H1 (cell line): ENCODE measurements at regions of chr19 and their contacts with region 1.

Region 1: DNA sequence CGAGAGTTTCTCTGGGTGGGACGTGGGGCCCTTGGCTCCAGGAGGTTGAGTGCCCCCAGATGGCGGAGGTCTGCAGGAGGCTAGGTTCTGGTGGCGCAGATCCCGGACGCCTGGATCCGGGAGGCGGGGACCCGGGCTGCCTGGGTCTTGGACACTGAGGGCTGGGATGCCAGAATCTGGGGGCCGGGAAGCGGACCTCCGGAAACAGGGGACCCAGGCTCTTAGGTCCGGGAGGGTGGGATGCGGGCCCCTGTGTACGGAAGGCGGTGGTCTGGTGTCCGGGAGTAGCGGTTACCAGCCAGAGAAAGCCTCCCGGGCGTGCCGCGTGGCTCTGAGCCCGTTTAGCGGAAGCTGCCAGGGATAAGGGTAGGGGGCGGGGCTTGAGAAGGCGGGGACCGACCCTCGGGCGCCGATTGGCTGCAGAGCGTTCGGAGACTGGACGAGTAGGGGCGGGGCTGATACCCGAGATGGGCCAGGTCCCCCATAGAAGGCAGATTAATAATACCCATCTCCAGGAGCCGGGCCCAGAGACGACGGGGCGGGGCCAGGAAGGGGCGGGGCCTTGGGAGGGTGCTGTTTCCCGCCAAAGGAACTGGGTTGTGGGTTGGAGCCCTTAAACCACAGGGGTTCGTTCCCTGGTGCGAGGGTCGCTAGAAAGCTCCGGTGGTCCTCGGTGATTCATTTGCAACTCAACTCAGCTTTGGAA is at the start of gene SLC1A5:
- DNase-seq: peak; percentile 95 to 99
- H3K4me3 ChIP-seq: peak within 1 kb of the TSS; percentile 78 to 96 (median 90)
- H3K27ac ChIP-seq: peak within 1 kb of the TSS; percentile 77; the same call in 1 of the 2 replicates
- H3K4me1 ChIP-seq: peaks cover 6 to 17% (median 10%) of the 10 kb centered on the region in 4 experiments; a peak in 6 of 7 replicates
- H3K27me3 ChIP-seq: no peaks in the 10 kb centered on the region; a peak in 1 of 7 replicates
- CTCF ChIP-seq: no peak
- EP300 ChIP-seq: no peak
- POLR2A ChIP-seq: peak; percentile 99
- RAD21 ChIP-seq: no peak; a peak in 1 of 4 replicates
- total RNA-seq, gene SLC1A5: 290 and 291 TPM in 2 replicates

Region 2: GRCh38 chr19:46600384-46601317 is 187.8 kb before region 1 on chr19:
- CTCF ChIA-PET with region 1: no interaction called
- POLR2A ChIA-PET with region 1: no interaction called
- DNase-seq: peak; percentile 88 to 100
- H3K4me3 ChIP-seq: peak overlapping the region; percentile 90 to 100 (median 94)
- H3K27ac ChIP-seq: peak overlapping the region; percentile 100
- H3K4me1 ChIP-seq: peaks cover 0 to 19% (median 9%) of the 10 kb centered on the region in 4 experiments; a peak in 5 of 7 replicates
- H3K27me3 ChIP-seq: no peaks in the 10 kb centered on the region
- CTCF ChIP-seq: no peak
- EP300 ChIP-seq: peak in 1 of 2 experiments; percentile 97; a peak in 2 of 3 replicates
- POLR2A ChIP-seq: peak in 1 of 2 experiments; percentile 78; a peak in 2 of 3 replicates
- RAD21 ChIP-seq: no peak

Region 3: DNA sequence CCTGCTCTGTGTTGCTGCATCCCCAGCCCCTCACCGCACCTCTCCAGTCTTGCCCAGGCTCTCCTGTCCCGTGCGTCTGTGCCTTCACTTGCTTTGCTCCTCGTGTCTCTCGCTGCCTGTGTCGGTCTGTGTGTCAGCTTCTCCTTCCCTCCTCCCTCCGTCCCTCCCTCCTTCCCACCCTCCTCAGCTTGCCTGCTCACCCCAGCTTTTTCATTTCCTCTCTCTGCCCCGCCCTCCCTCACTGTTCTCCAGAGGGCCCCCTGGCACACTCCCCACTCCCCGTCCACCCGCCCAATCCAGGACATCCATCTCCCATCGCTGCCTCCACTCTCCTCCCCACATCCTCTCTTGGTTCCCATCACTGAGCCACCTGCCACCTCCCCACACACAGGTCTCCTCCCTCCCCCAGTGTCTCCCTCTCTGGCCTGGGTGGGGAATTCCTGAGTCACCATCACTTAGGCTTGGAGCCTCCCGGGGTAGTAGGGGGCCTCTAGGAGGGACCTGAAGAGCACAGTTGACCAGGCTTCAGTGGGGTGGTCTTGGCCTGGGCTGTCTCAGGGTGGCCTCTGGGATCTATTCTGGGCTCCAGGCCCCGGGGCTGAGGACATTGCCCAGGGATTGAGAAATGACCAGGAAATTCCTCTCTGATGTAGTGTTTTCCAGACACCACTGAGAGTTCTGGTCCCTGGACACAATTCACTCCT is 163.3 kb before region 1 on chr19 and contains the start of gene PTGIR:
- CTCF ChIA-PET with region 1: no interaction called
- POLR2A ChIA-PET with region 1: no interaction called
- DNase-seq: no peak
- H3K4me3 ChIP-seq: no peak within 1 kb of the TSS
- H3K27ac ChIP-seq: no peak within 1 kb of the TSS
- H3K4me1 ChIP-seq: peaks cover 0 to 12% (median 4%) of the 10 kb centered on the region in 4 experiments; a peak in 4 of 7 replicates
- H3K27me3 ChIP-seq: no peaks in the 10 kb centered on the region
- CTCF ChIP-seq: no peak
- EP300 ChIP-seq: no peak
- POLR2A ChIP-seq: no peak
- RAD21 ChIP-seq: no peak
- total RNA-seq, gene PTGIR: not detected in 2 replicates

Region 4: DNA sequence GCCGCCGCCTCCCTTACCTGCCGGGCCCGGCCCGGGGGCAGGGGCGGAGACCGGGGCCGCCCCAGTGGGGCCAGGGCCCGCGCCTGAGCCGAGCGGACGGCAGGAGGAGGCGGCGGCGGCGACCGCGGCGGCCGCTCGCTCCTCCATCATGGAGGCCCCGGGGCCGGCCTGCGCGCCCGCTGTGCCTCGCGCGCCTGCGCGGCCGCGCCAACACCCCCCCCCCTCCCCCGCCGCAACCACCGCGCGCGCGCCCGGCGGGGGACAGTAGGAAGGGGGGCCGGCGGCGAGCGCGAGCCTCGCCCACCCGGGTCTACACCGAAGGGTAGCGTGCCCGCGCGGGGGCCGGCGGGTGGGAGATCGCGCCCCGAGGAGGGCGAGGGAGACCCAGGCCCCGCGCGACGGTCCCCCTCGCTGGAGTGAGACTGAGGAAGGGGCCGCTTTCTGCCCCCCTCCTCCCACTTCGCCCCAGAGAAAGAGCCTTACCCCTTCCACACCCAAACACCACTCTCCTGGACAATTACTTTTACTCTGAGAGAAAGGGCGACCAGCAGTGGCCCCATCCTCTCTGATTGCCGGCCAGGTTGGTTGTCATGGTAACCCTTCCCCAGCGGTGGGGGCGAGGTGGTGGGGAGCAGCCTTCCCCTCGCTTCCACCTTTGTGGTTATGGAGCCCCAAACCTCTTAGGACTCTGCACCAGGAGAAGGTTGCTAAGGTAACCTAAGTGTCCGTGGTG is 42.0 kb before region 1 on chr19 and contains the start of gene STRN4:
- CTCF ChIA-PET with region 1: interaction called, 6 read pairs
- POLR2A ChIA-PET with region 1: interaction called, 12 read pairs
- DNase-seq: peak in 1 of 2 experiments; percentile 67
- H3K4me3 ChIP-seq: peak within 1 kb of the TSS; percentile 84 to 97 (median 93)
- H3K27ac ChIP-seq: peak within 1 kb of the TSS; percentile 85
- H3K4me1 ChIP-seq: peaks cover 0 to 8% (median 2%) of the 10 kb centered on the region in 4 experiments; a peak in 6 of 7 replicates
- H3K27me3 ChIP-seq: no peaks in the 10 kb centered on the region
- CTCF ChIP-seq: no peak
- EP300 ChIP-seq: no peak
- POLR2A ChIP-seq: no peak; a peak in 1 of 3 replicates
- RAD21 ChIP-seq: no peak
- total RNA-seq, gene STRN4: 120 and 124 TPM in 2 replicates

Region 5: DNA sequence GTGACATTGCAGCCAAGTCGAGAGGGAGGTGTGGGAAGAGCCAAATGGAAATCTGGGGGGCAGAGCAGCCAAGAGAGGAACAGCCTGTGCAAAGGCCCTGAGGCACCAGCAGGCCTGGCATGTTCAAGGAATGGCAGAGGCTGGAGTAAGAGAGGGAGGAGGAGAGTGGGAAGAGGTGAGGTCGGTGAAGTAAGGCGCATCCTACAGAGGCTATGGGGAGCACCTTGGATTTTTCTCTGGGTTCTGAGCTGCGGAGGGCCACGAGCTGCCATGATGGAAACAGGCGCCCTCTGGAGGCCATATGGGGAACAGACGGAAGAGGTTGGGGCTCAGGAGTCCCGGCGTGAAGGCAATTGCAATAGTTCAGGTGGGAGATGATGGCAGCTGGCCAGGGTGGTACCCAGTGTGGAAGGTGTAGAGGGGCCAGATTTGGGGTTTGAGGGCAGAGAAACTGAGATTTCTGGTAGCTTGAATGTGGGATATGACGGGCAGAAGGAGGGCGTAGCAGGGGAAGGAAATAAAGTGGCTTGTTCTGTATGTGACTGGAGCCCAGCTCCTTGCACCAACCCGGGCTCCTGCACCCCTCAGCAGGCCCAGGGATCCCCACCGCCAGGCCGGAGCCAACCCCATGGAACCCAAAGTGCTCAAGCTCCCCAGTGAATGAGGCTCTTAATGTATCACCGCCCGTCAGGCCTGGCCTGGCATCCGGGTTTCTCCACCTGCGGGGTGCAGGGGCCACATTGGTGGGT is 21.7 kb before region 1 on chr19:
- CTCF ChIA-PET with region 1: interaction called, 16 read pairs
- POLR2A ChIA-PET with region 1: interaction called, 333 read pairs
- DNase-seq: peak in 1 of 2 experiments; percentile 84
- H3K4me3 ChIP-seq: no peak overlapping the region
- H3K27ac ChIP-seq: no peak overlapping the region
- H3K4me1 ChIP-seq: no peaks in the 10 kb centered on the region
- H3K27me3 ChIP-seq: no peaks in the 10 kb centered on the region
- CTCF ChIP-seq: peak; percentile 83 to 95 (median 91)
- EP300 ChIP-seq: peak in 1 of 2 experiments; percentile 24; a peak in 1 of 3 replicates
- POLR2A ChIP-seq: no peak
- RAD21 ChIP-seq: peak; percentile 51 to 67

Region 6: GRCh38 chr19:46821498-46822409 is 33.3 kb after region 1 on chr19:
- CTCF ChIA-PET with region 1: interaction called, 5 read pairs
- POLR2A ChIA-PET with region 1: interaction called, 68 read pairs
- DNase-seq: no peak
- H3K4me3 ChIP-seq: no peak overlapping the region
- H3K27ac ChIP-seq: no peak overlapping the region
- H3K4me1 ChIP-seq: no peaks in the 10 kb centered on the region; a peak in 1 of 7 replicates
- H3K27me3 ChIP-seq: no peaks in the 10 kb centered on the region
- CTCF ChIP-seq: no peak
- EP300 ChIP-seq: no peak
- POLR2A ChIP-seq: no peak
- RAD21 ChIP-seq: no peak

Region 7: DNA sequence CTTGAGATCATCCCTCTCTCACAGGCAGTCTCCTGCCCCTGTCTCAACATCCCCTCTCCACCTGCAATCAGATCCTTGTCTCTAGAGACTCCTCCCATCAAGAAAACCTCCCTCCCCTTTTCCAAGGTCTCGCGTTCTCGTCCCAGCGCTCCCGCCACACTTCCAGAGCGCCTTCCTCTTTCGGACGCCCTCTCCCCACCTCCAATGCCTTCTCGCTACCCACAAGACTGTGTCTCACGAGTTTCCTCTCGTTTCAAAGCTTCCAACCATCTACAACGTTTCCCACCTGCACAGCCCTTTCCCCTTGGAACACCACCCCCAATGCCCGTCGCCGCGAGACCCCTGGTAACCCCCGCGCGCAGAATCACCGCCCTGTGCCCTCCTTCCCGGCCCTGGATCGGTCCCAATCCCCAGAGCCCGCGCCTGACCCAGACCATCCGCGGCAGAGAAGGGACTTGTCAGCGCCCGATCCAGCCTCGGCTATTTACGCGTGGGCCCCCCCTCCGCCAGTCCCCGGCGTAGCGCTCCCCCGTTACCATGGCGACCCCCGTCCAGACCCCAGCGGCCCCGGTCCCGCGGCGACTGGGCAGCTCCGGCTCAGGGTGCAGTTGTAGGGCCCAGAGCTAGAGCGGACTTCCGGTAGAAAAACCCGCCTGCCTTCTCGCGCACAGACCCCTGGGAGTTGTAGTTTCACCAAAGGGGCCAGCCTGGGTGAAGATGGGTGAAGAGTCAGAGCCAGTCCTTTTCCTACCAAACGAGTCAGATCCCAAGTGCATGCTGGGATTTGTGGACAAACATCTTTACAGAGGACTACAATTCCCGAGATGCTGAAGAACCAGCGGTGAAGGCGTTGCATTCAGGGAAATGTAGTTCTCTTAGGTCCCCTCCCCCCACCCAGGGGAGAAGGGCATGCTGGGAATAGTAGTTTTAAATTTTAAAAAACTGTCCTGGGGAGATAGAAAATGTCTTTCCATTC is 62.1 kb after region 1 on chr19 and contains the start of gene AP2S1:
- CTCF ChIA-PET with region 1: interaction called, 4 read pairs
- POLR2A ChIA-PET with region 1: interaction called, 78 read pairs
- DNase-seq: peak; percentile 91 to 94
- H3K4me3 ChIP-seq: peak within 1 kb of the TSS; percentile 86 to 99 (median 90)
- H3K27ac ChIP-seq: peak within 1 kb of the TSS; percentile 82
- H3K4me1 ChIP-seq: peaks cover 0 to 7% (median 3%) of the 10 kb centered on the region in 4 experiments; a peak in 5 of 7 replicates
- H3K27me3 ChIP-seq: peaks cover 0 to 4% (median 2%) of the 10 kb centered on the region in 4 experiments; a peak in 2 of 7 replicates
- CTCF ChIP-seq: no peak
- EP300 ChIP-seq: no peak
- POLR2A ChIP-seq: peak; percentile 15 to 75
- RAD21 ChIP-seq: no peak
- total RNA-seq, gene AP2S1: 195 and 205 TPM in 2 replicates

Region 8: DNA sequence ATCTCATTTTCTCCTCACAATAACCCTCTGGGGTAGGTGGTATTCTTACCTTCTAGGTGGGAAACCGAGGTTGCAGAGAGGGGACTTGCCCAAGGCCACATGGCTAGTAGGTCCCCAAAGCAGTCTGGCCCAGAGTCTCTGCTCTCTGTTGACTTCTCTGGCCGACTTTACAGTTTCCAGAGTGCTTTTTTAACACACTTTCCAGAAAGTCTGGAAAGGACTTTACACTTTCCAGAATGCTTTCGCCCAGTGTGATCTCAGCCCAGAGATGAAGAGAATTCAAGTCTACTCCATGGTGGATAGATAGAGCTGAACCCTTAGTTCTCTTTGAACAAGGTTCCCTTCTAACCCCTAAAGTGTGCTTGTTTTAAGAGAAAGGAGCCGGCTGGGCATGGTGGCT is 84.6 kb after region 1 on chr19:
- CTCF ChIA-PET with region 1: no interaction called
- POLR2A ChIA-PET with region 1: no interaction called
- DNase-seq: no peak
- H3K4me3 ChIP-seq: no peak overlapping the region
- H3K27ac ChIP-seq: no peak overlapping the region
- H3K4me1 ChIP-seq: peaks cover 0 to 4% (median 1%) of the 10 kb centered on the region in 4 experiments; a peak in 2 of 7 replicates
- H3K27me3 ChIP-seq: no peaks in the 10 kb centered on the region
- CTCF ChIP-seq: no peak
- EP300 ChIP-seq: no peak
- POLR2A ChIP-seq: no peak
- RAD21 ChIP-seq: no peak